PC-9 (cell line): ENCODE measurements at regions of chr16 and their contacts with region 1.

Region 1: GRCh38 chr16:53549970-53550690 is 47.1 kb upstream of the AKTIP start:
- DNase-seq: peak; percentile 41 to 55
- H3K4me3 ChIP-seq: no peak overlapping the region
- H3K27ac ChIP-seq: no peak overlapping the region
- H3K4me1 ChIP-seq: no peaks in the 10 kb centered on the region
- H3K27me3 ChIP-seq: no peaks in the 10 kb centered on the region
- CTCF ChIP-seq: peak; percentile 78

Region 2: GRCh38 chr16:53054670-53055485 is 495.3 kb before region 1 on chr16 and contains the start of gene CHD9:
- CTCF ChIA-PET with region 1: no interaction called
- POLR2A ChIA-PET with region 1: no interaction called
- intact Hi-C with region 1: no loop called
- DNase-seq: peak; percentile 78 to 84
- H3K4me3 ChIP-seq: peak within 1 kb of the TSS; percentile 91
- H3K27ac ChIP-seq: peak within 1 kb of the TSS; percentile 13; the same call in 1 of the 2 replicates
- H3K4me1 ChIP-seq: peaks cover 27% of the 10 kb centered on the region
- H3K27me3 ChIP-seq: no peaks in the 10 kb centered on the region
- CTCF ChIP-seq: peak; percentile 94
- total RNA-seq, gene CHD9: 19.2 and 26.3 TPM in 2 replicates

Region 3: GRCh38 chr16:53503270-53503923 is 46.7 kb before region 1 on chr16:
- CTCF ChIA-PET with region 1: no interaction called
- POLR2A ChIA-PET with region 1: no interaction called
- intact Hi-C with region 1: no loop called
- DNase-seq: peak; percentile 99
- H3K4me3 ChIP-seq: peak overlapping the region; percentile 88
- H3K27ac ChIP-seq: peak overlapping the region; percentile 74
- H3K4me1 ChIP-seq: peaks cover 27% of the 10 kb centered on the region
- H3K27me3 ChIP-seq: no peaks in the 10 kb centered on the region
- CTCF ChIP-seq: no peak

Region 4: GRCh38 chr16:53865494-53865863 is 315.3 kb after region 1 on chr16:
- CTCF ChIA-PET with region 1: no interaction called
- POLR2A ChIA-PET with region 1: no interaction called
- intact Hi-C with region 1: no loop called
- DNase-seq: peak in 1 of 2 experiments; percentile 44
- H3K4me3 ChIP-seq: no peak overlapping the region
- H3K27ac ChIP-seq: peak overlapping the region; percentile 86
- H3K4me1 ChIP-seq: peaks cover 35% of the 10 kb centered on the region
- H3K27me3 ChIP-seq: no peaks in the 10 kb centered on the region
- CTCF ChIP-seq: no peak

Region 5: DNA sequence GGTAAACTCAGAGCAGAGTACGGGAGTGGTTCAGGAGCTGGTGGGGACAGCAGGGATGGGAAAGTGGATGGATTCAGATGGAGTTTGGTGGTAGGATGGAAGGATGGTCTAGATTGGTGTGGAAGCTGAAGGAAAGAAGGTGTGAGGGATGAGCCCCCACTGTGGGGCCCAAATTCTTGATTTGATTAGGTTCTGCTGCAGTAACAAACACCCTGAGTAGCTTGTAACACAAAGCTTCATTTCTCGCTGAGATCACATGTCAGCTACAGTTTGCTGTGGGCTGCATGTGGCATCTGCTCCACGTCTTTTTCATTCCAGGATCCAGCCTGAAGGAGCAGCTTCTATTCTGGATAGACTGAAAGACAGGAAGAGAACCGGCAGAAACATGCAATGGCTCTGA is 592.7 kb after region 1 on chr16:
- CTCF ChIA-PET with region 1: interaction called, 12 read pairs
- POLR2A ChIA-PET with region 1: no interaction called
- intact Hi-C with region 1: no loop called
- DNase-seq: no peak
- H3K4me3 ChIP-seq: no peak overlapping the region
- H3K27ac ChIP-seq: no peak overlapping the region
- H3K4me1 ChIP-seq: no peaks in the 10 kb centered on the region
- H3K27me3 ChIP-seq: no peaks in the 10 kb centered on the region
- CTCF ChIP-seq: no peak

Region 6: DNA sequence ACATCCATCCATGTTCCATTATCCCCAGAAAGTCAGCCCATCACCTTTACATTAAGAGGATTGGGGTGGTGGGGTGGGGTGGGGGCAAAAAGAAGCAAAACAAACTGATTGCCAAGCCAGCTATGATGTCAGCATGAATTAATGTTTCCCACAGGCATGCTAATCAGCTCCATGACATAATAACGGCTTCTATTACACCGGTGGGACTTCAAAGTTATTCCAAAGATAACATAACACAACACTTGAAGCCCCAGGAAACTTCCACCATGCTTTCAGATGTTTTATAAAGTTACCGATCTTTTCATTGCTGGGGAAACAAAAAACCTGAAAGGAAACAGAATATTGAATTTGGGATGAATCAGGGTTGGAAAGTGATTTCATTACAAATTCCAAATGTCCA is 1224.6 kb after region 1 on chr16:
- CTCF ChIA-PET with region 1: interaction called, 11 read pairs
- POLR2A ChIA-PET with region 1: no interaction called
- intact Hi-C with region 1: no loop called
- DNase-seq: no peak
- H3K4me3 ChIP-seq: no peak overlapping the region
- H3K27ac ChIP-seq: no peak overlapping the region
- H3K4me1 ChIP-seq: no peaks in the 10 kb centered on the region
- H3K27me3 ChIP-seq: no peaks in the 10 kb centered on the region
- CTCF ChIP-seq: no peak

Region 7: DNA sequence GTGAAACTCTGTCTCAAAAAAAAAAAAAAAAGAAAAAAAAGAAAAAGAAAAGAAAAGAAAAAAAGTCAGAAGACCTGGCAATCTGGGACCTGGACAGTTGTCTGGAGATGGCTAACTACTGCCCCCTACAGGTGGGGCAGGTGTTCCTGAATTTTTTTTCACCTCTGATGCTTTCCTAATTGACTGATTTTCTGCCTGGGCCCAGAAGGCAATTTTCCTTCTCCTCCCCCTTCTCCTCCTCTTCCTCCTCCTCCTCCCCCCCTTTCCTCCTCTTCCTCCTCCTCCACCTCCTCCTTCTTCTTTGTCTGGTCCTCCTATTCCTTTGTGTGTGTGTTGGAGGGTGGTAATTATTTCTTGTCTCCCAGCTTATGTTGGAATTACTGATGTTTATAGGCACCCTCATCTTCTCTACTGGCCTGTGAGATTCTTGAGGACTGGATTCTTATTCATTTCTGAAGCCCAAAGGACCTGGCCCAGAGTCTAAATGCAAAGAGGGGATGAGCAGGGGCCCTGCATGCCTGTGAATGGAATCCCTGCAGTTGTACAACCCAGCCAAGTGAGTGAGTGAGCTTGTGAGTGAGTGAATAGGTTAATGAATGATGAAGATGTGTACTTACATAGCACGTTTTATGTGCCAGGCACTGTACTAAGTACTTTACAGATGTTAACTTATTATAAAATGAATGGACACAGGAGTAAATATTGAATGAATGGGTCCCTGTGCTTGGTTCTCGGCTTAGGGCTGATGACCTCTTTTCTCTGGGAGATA is 1407.5 kb after region 1 on chr16:
- CTCF ChIA-PET with region 1: no interaction called
- POLR2A ChIA-PET with region 1: no interaction called
- intact Hi-C with region 1: loop called (anchors 5 kb)
- DNase-seq: peak; percentile 38 to 51
- H3K4me3 ChIP-seq: no peak overlapping the region
- H3K27ac ChIP-seq: no peak overlapping the region
- H3K4me1 ChIP-seq: no peaks in the 10 kb centered on the region
- H3K27me3 ChIP-seq: no peaks in the 10 kb centered on the region
- CTCF ChIP-seq: peak; percentile 83